ENCODE measurements at regions of chr16 and their contacts with region 1.

Region 1: GRCh38 chr16:89319883-89320781 is 102.6 kb downstream of the ZNF778 start:
- DNase-seq: peak in 1 of 9 donors; percentile 59
- ATAC-seq: no peak
- H3K4me3 ChIP-seq: no peak overlapping the region
- H3K4me3 Mint-ChIP-seq: peak overlapping the region in 9 of 10 donors; percentile 36 to 78 (median 48)
- H3K27ac ChIP-seq: no peak overlapping the region
- H3K27ac Mint-ChIP-seq: peak overlapping the region in 7 of 9 donors; percentile 21 to 82 (median 54)
- H3K4me1 ChIP-seq: peaks cover 81 to 94% of the 10 kb centered on the region in 2 donors
- H3K4me1 Mint-ChIP-seq: peaks cover 80 to 97% (median 93%) of the 10 kb centered on the region in 7 donors
- H3K27me3 ChIP-seq: no peaks in the 10 kb centered on the region
- H3K27me3 Mint-ChIP-seq: no peaks in the 10 kb centered on the region

Region 2: DNA sequence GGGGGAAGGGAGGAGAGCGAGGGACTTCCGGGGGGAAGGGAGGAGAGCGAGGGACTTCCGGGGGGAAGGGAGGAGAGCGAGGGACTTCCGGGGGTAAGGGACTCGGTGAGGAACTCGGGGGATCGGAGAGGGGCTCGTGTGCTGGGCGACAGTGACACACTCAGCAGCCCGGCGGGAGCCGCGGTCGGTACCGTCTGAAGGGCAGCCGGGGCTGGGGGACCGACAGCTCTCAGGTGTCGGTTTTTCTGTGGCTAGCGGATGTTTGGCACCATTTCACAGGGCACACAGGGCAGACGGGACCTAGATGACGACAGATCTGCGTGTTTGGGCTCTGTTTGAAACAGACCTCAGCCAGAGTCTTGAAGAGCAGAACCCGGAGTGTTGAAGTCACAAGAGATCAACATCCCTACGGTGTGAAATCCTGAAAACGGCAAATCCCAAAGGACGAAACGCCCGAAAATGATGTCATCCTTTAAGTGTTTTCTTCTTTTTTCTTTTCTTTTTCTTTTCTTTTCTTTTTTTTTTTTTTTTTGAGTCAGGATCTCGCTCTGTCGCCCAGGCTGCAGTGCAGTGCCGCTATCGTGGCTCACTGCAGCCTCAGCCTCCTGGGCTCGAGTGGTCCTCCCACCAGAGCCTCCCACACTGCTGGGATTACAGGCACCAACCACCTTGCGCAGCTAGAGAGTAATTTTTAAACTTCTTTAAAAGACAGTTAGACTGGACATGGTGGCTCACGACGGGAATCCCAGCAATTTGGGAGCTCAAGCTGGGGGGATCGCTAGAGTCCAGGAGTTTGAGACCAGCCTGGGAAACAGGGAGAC is 78.7 kb before region 1 on chr16:
- CTCF ChIA-PET with region 1: interaction called, 3 read pairs
- POLR2A ChIA-PET with region 1: interaction called, 8 read pairs
- intact Hi-C with region 1: loop called in 1 of 2 experiments (anchors 2 kb)
- DNase-seq: peak; percentile 75 to 95 (median 93)
- ATAC-seq: peak; percentile 86
- H3K4me3 ChIP-seq: peak overlapping the region; percentile 68
- H3K4me3 Mint-ChIP-seq: peak overlapping the region; percentile 83 to 100 (median 96)
- H3K27ac ChIP-seq: peak overlapping the region; percentile 91
- H3K27ac Mint-ChIP-seq: peak overlapping the region; percentile 94 to 100 (median 99)
- H3K4me1 ChIP-seq: peaks cover 5 to 6% of the 10 kb centered on the region in 2 donors
- H3K4me1 Mint-ChIP-seq: peaks cover 0 to 31% (median 18%) of the 10 kb centered on the region in 7 donors
- H3K27me3 ChIP-seq: no peaks in the 10 kb centered on the region
- H3K27me3 Mint-ChIP-seq: no peaks in the 10 kb centered on the region

Region 3: DNA sequence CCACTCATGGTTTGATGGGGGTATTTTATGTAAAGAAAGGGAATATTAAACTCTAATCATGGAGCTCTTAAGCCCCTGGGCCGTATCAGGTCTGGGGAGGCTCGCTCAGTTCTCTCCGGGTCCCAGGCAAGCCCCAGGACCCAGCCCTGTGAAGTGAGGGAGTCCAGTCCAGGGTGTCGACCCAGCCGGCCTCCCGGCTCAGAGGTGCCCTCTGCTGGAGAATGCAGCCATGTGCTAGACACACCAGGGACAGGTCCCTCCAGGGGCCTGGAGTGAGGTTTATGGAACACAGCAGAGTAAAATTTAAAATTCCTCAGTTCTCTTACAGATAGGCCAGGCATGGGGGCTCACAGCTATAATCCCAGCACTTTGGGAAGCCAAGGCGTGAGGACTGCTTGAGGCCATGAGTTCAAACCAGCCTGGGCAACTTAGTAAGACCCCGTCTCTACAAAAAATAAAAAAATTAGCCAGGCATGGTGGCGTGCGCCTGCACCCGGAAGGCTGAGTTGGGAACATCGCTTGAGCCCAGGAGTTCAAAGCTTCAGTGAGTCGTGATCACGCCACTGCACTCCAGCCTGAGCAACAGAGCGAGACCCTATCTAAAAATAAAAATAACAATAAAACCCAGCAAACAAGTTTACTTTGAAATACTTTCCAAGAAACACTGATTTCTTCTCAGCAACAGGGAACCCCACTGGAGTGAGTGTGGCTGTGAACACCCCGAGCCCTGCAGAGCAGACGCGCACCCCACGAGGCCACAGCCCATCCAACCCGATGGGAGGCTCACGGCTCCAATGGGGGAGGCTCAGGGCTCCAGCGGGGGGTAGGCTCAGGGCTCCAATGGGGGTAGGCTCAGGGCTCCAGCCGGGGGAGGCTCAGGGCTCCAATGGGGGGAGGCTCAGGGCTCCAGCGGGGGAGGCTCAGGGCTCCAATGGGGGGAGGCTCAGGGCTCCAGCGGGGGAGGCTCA is 30.4 kb before region 1 on chr16:
- CTCF ChIA-PET with region 1: interaction called, 4 read pairs
- POLR2A ChIA-PET with region 1: no interaction called
- intact Hi-C with region 1: loop called in 1 of 2 experiments (anchors 2 kb)
- DNase-seq: peak; percentile 43 to 71 (median 60)
- ATAC-seq: peak; percentile 89
- H3K4me3 ChIP-seq: no peak overlapping the region
- H3K4me3 Mint-ChIP-seq: no peak overlapping the region
- H3K27ac ChIP-seq: no peak overlapping the region
- H3K27ac Mint-ChIP-seq: peak overlapping the region in 8 of 9 donors; percentile 20 to 87 (median 55)
- H3K4me1 ChIP-seq: no peaks in the 10 kb centered on the region
- H3K4me1 Mint-ChIP-seq: peaks cover 6 to 19% (median 13%) of the 10 kb centered on the region in 7 donors
- H3K27me3 ChIP-seq: no peaks in the 10 kb centered on the region
- H3K27me3 Mint-ChIP-seq: no peaks in the 10 kb centered on the region

Region 4: DNA sequence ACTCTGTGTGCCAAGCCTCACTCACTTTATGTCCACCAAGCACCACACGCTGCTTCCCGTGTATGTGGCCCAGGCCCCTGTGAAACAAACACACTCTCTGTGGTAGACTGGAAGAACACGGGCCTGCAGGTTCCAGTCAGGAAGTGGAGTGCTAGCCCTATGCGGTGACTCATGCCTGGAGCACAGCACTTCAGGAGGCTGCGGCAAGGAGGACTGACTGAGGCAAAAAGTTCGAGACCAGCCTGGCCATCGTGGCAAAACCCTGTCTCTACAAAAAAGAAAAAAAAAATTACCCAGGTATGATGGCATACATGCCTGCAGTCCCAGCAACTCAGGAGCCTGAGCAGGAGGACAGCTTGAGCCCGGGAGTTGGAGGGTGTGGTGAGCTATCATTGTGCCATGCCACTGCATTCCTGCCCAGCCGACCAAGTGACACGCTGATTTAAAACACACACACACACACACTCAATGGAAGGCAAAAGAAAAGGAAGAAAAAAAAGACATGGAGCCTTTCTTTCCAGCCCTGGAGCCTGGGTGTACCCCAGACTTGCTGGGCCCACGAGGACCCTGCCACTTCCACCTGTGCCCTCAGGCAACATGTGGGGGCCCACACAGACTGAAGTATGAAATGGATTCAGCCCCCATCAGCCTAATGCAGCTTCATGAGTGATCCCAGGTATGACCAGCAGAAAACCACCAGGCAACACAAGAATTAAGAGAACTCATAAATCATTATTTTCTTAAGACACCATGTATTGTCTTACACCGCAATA is 43.7 kb after region 1 on chr16:
- CTCF ChIA-PET with region 1: no interaction called
- POLR2A ChIA-PET with region 1: interaction called, 5 read pairs
- intact Hi-C with region 1: loop called (anchors 2 to 5 kb)
- DNase-seq: peak in 2 of 9 donors; percentile 12 to 59
- ATAC-seq: no peak
- H3K4me3 ChIP-seq: no peak overlapping the region
- H3K4me3 Mint-ChIP-seq: peak overlapping the region; percentile 10 to 73 (median 62)
- H3K27ac ChIP-seq: peak overlapping the region; percentile 23
- H3K27ac Mint-ChIP-seq: peak overlapping the region; percentile 13 to 90 (median 77)
- H3K4me1 ChIP-seq: peaks cover 56 to 75% of the 10 kb centered on the region in 2 donors
- H3K4me1 Mint-ChIP-seq: peaks cover 65 to 99% (median 87%) of the 10 kb centered on the region in 7 donors
- H3K27me3 ChIP-seq: no peaks in the 10 kb centered on the region
- H3K27me3 Mint-ChIP-seq: no peaks in the 10 kb centered on the region

Region 5: GRCh38 chr16:89498839-89499238 is 178.7 kb after region 1 on chr16:
- CTCF ChIA-PET with region 1: no interaction called
- POLR2A ChIA-PET with region 1: no interaction called
- intact Hi-C with region 1: no loop called
- DNase-seq: no peak
- ATAC-seq: no peak
- H3K4me3 ChIP-seq: no peak overlapping the region
- H3K4me3 Mint-ChIP-seq: no peak overlapping the region
- H3K27ac ChIP-seq: no peak overlapping the region
- H3K27ac Mint-ChIP-seq: no peak overlapping the region
- H3K4me1 ChIP-seq: no peaks in the 10 kb centered on the region
- H3K4me1 Mint-ChIP-seq: peaks cover under 1 to 10% (median 4%) of the 10 kb centered on the region in 7 donors
- H3K27me3 ChIP-seq: no peaks in the 10 kb centered on the region
- H3K27me3 Mint-ChIP-seq: no peaks in the 10 kb centered on the region